Common myeloid progenitor, CD34-positive (primary cell): ENCODE measurements at regions of chr17 and their contacts with region 1.

Region 1: GRCh38 chr17:41665566-41666236 is 23.0 kb upstream of the EIF1 start:
- DNase-seq: peak; percentile 85 to 89 (median 88)
- H3K4me3 ChIP-seq: peak overlapping the region in 6 of 7 experiments; percentile 35 to 80 (median 60)
- H3K27ac ChIP-seq: peak overlapping the region; percentile 50 to 78
- H3K4me1 ChIP-seq: peaks cover 0 to 37% (median 30%) of the 10 kb centered on the region in 4 experiments
- H3K27me3 ChIP-seq: no peaks in the 10 kb centered on the region

Region 2: DNA sequence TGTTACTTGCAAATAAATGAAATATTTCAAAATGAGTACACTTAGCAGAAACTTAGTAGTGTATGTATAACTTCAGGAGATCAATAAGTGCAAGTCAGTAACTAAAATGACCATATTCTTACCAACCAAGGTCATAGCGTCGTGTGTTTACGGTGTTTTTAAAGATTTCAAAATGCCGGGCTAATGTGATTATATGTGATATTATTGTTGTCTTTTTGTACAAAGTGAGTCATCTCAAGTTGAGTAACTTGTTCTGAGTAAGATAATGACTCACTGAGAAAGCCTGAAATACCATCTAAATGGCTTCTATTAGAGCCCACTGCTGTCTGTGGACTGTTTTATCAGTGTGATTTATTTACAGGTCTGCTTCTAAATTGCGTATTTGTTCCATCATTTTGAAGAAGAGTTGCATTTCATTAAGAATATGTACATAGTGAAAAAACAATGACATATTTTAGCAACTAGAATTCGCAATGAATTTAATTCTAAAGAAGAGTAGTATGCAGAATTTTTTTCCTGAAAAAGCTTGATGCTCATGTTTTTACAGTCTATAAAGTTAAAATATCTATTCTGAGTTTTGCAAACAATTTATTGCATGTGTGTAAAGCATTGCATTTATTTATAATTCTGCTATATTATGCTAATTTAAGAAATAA is 811.4 kb before region 1 on chr17:
- CTCF ChIA-PET with region 1: interaction called, 15 read pairs
- POLR2A ChIA-PET with region 1: no interaction called
- DNase-seq: peak in 2 of 3 donors; percentile 14
- H3K4me3 ChIP-seq: no peak overlapping the region
- H3K27ac ChIP-seq: no peak overlapping the region
- H3K4me1 ChIP-seq: no peaks in the 10 kb centered on the region
- H3K27me3 ChIP-seq: peaks cover 0 to 16% (median 12%) of the 10 kb centered on the region in 5 experiments

Region 3: GRCh38 chr17:41610965-41611640 is 54.6 kb before region 1 on chr17:
- CTCF ChIA-PET with region 1: interaction called, 10 read pairs
- POLR2A ChIA-PET with region 1: no interaction called
- DNase-seq: no peak
- H3K4me3 ChIP-seq: no peak overlapping the region
- H3K27ac ChIP-seq: no peak overlapping the region
- H3K4me1 ChIP-seq: no peaks in the 10 kb centered on the region
- H3K27me3 ChIP-seq: peaks cover 0 to 6% (median 2%) of the 10 kb centered on the region in 5 experiments

Region 4: GRCh38 chr17:41635121-41636097 is 30.3 kb before region 1 on chr17:
- CTCF ChIA-PET with region 1: no interaction called
- POLR2A ChIA-PET with region 1: no interaction called
- DNase-seq: no peak
- H3K4me3 ChIP-seq: no peak overlapping the region
- H3K27ac ChIP-seq: no peak overlapping the region
- H3K4me1 ChIP-seq: peaks cover 0 to 5% (median under 1%) of the 10 kb centered on the region in 4 experiments
- H3K27me3 ChIP-seq: no peaks in the 10 kb centered on the region

Region 5: GRCh38 chr17:41678907-41679739 is 13.4 kb after region 1 on chr17:
- CTCF ChIA-PET with region 1: interaction called, 72 read pairs
- POLR2A ChIA-PET with region 1: interaction called, 3 read pairs
- DNase-seq: peak; percentile 95 to 99 (median 98)
- H3K4me3 ChIP-seq: peak overlapping the region in 6 of 7 experiments; percentile 28 to 83 (median 53)
- H3K27ac ChIP-seq: peak overlapping the region; percentile 62 to 90
- H3K4me1 ChIP-seq: peaks cover 12 to 72% (median 60%) of the 10 kb centered on the region in 4 experiments
- H3K27me3 ChIP-seq: no peaks in the 10 kb centered on the region

Region 6: GRCh38 chr17:41695954-41696756 is 30.5 kb after region 1 on chr17:
- CTCF ChIA-PET with region 1: interaction called, 10 read pairs
- POLR2A ChIA-PET with region 1: no interaction called
- DNase-seq: peak; percentile 83 to 93 (median 93)
- H3K4me3 ChIP-seq: no peak overlapping the region
- H3K27ac ChIP-seq: no peak overlapping the region
- H3K4me1 ChIP-seq: peaks cover 0 to 13% (median 8%) of the 10 kb centered on the region in 4 experiments
- H3K27me3 ChIP-seq: no peaks in the 10 kb centered on the region

Region 7: DNA sequence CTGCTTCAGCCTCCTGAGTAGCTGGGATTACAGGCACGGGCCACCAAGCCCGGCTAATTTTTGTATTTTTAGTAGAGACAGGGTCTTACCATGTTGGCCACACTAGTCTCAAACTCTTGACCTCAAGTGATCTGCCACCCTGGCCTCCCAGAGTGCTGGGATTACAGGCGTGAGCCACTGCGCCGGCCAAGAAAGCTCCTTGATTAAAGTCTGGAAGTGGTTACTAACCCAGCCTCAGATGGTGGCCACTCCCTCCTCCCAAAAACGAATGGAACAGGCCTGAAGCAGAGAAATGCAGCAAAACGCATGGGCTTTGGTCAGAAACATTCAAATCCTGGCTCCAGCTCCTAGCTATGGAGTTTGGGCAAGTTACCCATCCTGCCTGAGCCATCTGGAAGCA is 158.4 kb after region 1 on chr17:
- CTCF ChIA-PET with region 1: no interaction called
- POLR2A ChIA-PET with region 1: no interaction called
- DNase-seq: no peak
- H3K4me3 ChIP-seq: no peak overlapping the region
- H3K27ac ChIP-seq: no peak overlapping the region
- H3K4me1 ChIP-seq: no peaks in the 10 kb centered on the region
- H3K27me3 ChIP-seq: no peaks in the 10 kb centered on the region